ENCODE measurements at regions of chr2 and their contacts with region 1.

Region 1: GRCh38 chr2:62705007-62705829 is at the start of gene EHBP1:
- DNase-seq: peak; percentile 98
- ATAC-seq: peak; percentile 93
- H3K4me3 Mint-ChIP-seq: peak within 1 kb of the TSS; percentile 95
- H3K27ac Mint-ChIP-seq: peak within 1 kb of the TSS; percentile 78
- H3K4me1 Mint-ChIP-seq: peaks cover 34% of the 10 kb centered on the region
- H3K27me3 Mint-ChIP-seq: no peaks in the 10 kb centered on the region
- CTCF ChIP-seq: no peak
- total RNA-seq, gene EHBP1: 24.0 and 25.0 TPM in 2 replicates

Region 2: GRCh38 chr2:61065715-61066709 is 1639.2 kb before region 1 on chr2 and contains the start of gene SANBR:
- CTCF ChIA-PET with region 1: no interaction called
- POLR2A ChIA-PET with region 1: no interaction called
- intact Hi-C with region 1: loop called (anchors 5 kb)
- DNase-seq: peak; percentile 85
- ATAC-seq: peak; percentile 98
- H3K4me3 Mint-ChIP-seq: peak within 1 kb of the TSS; percentile 96
- H3K27ac Mint-ChIP-seq: peak within 1 kb of the TSS; percentile 82
- H3K4me1 Mint-ChIP-seq: peaks cover 11% of the 10 kb centered on the region
- H3K27me3 Mint-ChIP-seq: no peaks in the 10 kb centered on the region
- CTCF ChIP-seq: no peak
- total RNA-seq, gene SANBR: 2.0 and 2.2 TPM in 2 replicates

Region 3: GRCh38 chr2:61854474-61855182 is 850.6 kb before region 1 on chr2:
- CTCF ChIA-PET with region 1: no interaction called
- POLR2A ChIA-PET with region 1: no interaction called
- intact Hi-C with region 1: loop called (anchors 10 kb)
- DNase-seq: peak; percentile 69
- ATAC-seq: peak; percentile 86
- H3K4me3 Mint-ChIP-seq: peak overlapping the region; percentile 94
- H3K27ac Mint-ChIP-seq: peak overlapping the region; percentile 95
- H3K4me1 Mint-ChIP-seq: peaks cover 19% of the 10 kb centered on the region
- H3K27me3 Mint-ChIP-seq: no peaks in the 10 kb centered on the region
- CTCF ChIP-seq: no peak

Region 4: DNA sequence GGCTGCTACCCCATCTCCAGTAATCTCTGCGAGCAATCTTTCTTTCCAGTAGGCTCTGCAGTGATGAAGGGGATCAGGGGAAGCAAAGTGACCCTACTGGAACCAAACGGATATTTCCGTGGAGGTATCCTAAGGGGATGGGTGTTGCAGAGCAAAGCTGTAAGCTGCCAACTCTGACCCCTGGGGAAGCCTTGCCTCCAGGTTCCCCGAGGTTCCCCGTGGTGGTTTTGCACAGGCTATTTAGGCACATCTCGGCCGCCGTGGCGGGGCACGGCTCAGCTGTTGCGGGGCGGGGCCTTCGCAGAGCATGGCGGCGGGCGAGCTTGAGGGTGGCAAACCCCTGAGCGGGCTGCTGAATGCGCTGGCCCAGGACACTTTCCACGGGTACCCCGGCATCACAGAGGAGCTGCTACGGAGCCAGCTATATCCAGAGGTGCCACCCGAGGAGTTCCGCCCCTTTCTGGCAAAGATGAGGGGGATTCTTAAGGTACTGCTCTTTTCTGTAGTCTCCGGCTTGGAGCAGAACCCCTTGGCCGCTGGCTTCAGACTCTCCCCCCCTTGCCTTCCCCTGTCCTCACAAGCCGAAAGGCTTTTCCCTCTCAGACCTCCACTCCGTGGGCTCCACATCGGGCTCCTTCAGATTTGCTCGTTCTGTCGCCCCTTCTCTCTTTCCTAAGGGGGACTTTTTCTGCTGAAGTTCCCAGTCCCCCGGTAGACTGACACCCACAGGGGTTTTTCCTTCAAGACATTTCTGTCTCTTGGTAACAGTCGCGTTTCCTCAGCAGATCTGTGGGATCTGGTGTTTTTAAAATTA is 799.6 kb before region 1 on chr2 and contains the start of gene COMMD1:
- CTCF ChIA-PET with region 1: no interaction called
- POLR2A ChIA-PET with region 1: no interaction called
- intact Hi-C with region 1: loop called (anchors 5 kb)
- DNase-seq: peak; percentile 78
- ATAC-seq: peak; percentile 100
- H3K4me3 Mint-ChIP-seq: peak within 1 kb of the TSS; percentile 97
- H3K27ac Mint-ChIP-seq: peak within 1 kb of the TSS; percentile 86
- H3K4me1 Mint-ChIP-seq: peaks cover 11% of the 10 kb centered on the region
- H3K27me3 Mint-ChIP-seq: no peaks in the 10 kb centered on the region
- CTCF ChIP-seq: no peak
- total RNA-seq, gene COMMD1: 36.8 and 37.1 TPM in 2 replicates

Region 5: GRCh38 chr2:61970807-61971556 is 734.2 kb before region 1 on chr2:
- CTCF ChIA-PET with region 1: no interaction called
- POLR2A ChIA-PET with region 1: no interaction called
- intact Hi-C with region 1: no loop called
- DNase-seq: no peak
- ATAC-seq: no peak
- H3K4me3 Mint-ChIP-seq: no peak overlapping the region
- H3K27ac Mint-ChIP-seq: no peak overlapping the region
- H3K4me1 Mint-ChIP-seq: peaks cover 2% of the 10 kb centered on the region
- H3K27me3 Mint-ChIP-seq: no peaks in the 10 kb centered on the region
- CTCF ChIP-seq: no peak

Region 6: DNA sequence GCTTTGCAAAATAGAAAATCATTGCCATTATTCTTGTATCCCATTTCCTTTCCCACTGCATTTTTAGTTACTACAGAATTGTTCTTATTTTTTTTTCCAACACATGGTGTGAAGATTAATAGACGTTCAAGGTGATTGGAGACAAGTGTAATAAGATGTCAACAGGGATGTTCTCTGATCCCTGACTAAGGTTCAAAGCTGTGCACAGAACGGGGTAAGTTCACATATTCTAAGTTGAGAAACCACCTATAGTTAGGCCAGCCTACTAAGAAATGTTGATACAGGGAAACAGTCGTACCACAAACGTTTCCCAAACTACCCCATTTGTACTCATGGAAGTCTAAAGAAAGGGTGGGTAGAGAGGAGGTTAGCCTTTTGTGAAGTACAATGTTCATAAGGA is 192.8 kb before region 1 on chr2:
- CTCF ChIA-PET with region 1: no interaction called
- POLR2A ChIA-PET with region 1: no interaction called
- intact Hi-C with region 1: no loop called
- DNase-seq: no peak
- ATAC-seq: no peak
- H3K4me3 Mint-ChIP-seq: no peak overlapping the region
- H3K27ac Mint-ChIP-seq: no peak overlapping the region
- H3K4me1 Mint-ChIP-seq: no peaks in the 10 kb centered on the region
- H3K27me3 Mint-ChIP-seq: peaks cover 7% of the 10 kb centered on the region
- CTCF ChIP-seq: no peak

Region 7: DNA sequence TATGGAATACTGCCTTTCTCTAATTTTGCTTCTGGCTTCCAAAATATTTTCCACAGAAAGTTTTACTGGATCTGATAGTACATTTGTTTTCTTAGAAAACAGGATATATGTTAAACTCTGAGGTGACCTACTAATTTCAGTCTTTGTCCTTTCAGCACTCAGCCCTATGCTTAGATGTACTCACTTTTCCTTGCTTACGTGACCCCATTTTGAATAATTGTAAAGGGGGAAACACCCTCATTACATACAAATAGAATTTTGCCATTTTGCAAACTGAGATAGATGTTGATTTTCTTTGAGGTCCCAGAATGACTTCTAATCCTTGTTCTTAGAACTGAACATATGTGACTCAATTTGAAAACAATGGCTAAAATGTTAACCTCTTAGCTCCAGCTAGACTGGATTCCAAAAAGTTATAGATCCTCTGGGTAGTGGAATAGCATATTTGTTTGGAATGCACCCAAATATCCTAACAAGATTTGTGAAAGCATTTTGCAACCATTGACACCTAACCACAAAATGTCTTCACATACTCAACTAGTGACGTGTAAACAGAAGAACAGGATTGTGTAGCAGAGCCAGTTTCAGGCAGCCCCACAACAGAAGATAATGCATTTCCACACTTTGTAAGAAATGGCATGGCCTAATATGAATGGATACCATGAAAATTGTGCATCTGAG is 44.5 kb before region 1 on chr2:
- CTCF ChIA-PET with region 1: no interaction called
- POLR2A ChIA-PET with region 1: no interaction called
- intact Hi-C with region 1: loop called (anchors 2 kb)
- DNase-seq: no peak
- ATAC-seq: no peak
- H3K4me3 Mint-ChIP-seq: no peak overlapping the region
- H3K27ac Mint-ChIP-seq: no peak overlapping the region
- H3K4me1 Mint-ChIP-seq: peaks cover 27% of the 10 kb centered on the region
- H3K27me3 Mint-ChIP-seq: peaks cover 2% of the 10 kb centered on the region
- CTCF ChIP-seq: no peak

Region 8: GRCh38 chr2:62817995-62818713 is 112.9 kb after region 1 on chr2:
- CTCF ChIA-PET with region 1: no interaction called
- POLR2A ChIA-PET with region 1: no interaction called
- intact Hi-C with region 1: no loop called
- DNase-seq: no peak
- ATAC-seq: no peak
- H3K4me3 Mint-ChIP-seq: no peak overlapping the region
- H3K27ac Mint-ChIP-seq: no peak overlapping the region
- H3K4me1 Mint-ChIP-seq: no peaks in the 10 kb centered on the region
- H3K27me3 Mint-ChIP-seq: no peaks in the 10 kb centered on the region
- CTCF ChIP-seq: no peak

Region 9: DNA sequence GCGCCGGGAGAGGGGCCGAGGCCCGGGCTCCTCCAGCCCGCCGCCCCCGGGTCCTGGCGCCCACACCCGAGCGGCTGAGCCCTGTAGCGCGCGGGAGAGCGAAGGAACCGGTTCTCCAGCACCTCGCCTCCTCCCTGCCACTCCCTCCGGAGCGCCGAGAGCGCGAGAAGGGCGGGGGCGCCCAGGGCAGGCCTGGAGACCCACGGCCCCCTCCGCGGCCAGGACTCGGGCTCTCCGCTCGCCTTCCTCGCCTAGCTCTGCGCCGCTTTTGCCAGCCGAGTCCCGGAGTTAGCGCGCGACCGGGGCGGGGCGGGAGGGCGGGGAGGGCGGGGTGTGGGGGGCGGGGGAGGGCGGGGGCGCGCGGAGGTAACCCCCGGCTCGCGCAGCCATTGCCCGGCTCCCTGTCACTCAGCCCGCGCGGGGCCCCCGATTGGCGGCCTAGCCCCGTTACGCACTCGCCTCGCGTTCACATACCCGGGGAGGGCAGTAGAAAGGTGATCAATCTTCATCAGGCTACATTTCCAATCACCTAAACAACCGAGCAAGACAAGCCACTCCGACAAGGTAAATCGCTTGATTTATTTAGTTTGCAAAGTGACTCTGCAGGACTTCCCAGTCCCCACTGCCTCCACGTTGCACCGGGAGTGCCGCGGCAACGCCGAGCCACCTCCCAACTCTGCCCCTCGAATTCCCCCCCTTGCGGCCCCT is 345.3 kb after region 1 on chr2 and contains the start of gene OTX1:
- CTCF ChIA-PET with region 1: no interaction called
- POLR2A ChIA-PET with region 1: no interaction called
- intact Hi-C with region 1: loop called (anchors 5 kb)
- DNase-seq: peak; percentile 58
- ATAC-seq: peak; percentile 86
- H3K4me3 Mint-ChIP-seq: peak within 1 kb of the TSS; percentile 87
- H3K27ac Mint-ChIP-seq: no peak within 1 kb of the TSS
- H3K4me1 Mint-ChIP-seq: peaks cover 74% of the 10 kb centered on the region
- H3K27me3 Mint-ChIP-seq: peaks cover 75% of the 10 kb centered on the region
- CTCF ChIP-seq: no peak
- total RNA-seq, gene OTX1: not detected in 2 replicates